ENCODE measurements at regions of chr13 and their contacts with region 1.

Region 1: DNA sequence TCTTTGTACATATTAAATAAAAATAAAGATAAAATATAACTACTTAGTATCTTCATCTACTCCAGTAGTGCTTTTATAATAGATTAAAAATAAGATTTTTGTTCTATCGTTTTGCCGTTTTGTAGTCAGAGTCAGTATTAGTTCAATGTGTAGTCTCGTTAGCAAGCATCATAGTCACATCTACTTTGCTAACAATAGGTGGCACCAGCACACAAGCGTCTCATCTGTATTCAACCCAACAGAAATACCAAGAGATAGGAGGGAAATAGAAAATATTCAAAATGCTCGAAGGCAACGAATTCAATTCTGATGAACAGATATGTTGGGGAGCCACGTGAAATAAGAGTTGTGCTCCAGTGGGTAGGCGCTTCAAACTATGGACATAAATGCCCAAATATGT is 21.4 kb upstream of the MICU2 start:
- DNase-seq: peak; percentile 27
- H3K4me3 Mint-ChIP-seq: no peak overlapping the region
- H3K27ac Mint-ChIP-seq: no peak overlapping the region
- H3K4me1 Mint-ChIP-seq: no peaks in the 10 kb centered on the region
- H3K27me3 Mint-ChIP-seq: peaks cover 3% of the 10 kb centered on the region

Region 2: DNA sequence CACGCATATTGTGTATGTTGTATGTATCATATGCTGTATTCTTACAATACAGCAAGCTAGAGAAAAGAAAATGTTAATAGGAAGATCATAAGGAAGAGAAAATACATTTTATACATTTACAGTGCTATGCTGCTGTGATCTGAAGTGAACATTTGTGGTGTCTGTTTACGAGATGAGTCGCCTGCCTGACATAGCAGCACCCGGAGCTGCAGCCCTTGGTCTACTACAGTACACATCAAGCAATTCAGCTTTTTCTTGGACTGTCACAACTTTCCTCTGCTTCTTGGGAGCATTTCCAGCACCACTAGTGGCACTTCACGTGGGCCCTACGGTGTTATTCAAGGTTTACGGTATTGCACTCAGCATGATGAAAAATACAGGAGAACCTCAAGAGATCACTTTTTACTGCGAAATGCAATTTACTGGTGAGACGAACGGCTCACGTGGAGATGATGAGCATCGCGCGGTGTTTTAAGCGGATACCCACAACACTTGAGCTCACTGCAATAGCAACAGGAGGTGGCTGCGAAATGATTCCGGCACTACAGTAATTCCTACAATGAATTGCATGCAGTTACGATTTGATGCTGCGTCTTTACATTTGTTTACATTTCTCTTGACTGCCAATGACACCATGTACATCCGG is 353.9 kb after region 1 on chr13:
- CTCF ChIA-PET with region 1: no interaction called
- intact Hi-C with region 1: no loop called
- DNase-seq: no peak
- H3K4me3 Mint-ChIP-seq: no peak overlapping the region
- H3K27ac Mint-ChIP-seq: no peak overlapping the region
- H3K4me1 Mint-ChIP-seq: no peaks in the 10 kb centered on the region
- H3K27me3 Mint-ChIP-seq: no peaks in the 10 kb centered on the region

Region 3: DNA sequence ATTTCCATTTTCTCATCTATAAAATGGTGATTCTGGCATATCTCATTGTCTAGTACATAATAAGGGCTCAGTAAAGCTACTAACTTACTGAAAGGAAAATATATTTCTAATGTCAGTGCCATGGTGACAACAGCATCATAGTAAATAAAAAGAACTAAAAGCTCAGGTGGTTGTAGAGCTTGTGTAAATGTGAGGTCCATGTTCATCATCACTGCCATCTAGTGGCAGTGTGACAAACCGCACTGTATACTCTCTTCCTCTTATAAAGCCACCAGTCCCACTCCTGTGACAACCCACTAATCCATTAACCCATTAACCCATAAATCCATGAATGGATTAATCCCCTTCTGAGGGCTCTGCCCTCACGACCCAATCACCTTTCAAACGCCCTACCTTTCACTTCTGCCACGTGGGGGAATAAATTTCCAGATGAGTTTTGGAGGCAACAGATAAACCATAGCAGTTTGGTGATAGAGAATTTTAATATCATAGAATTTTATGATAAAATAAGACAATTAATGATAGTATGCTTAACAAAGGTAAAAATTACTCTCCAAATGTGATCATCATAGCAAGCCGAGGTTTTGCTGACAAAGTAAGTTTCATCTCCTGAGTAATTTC is 1395.0 kb after region 1 on chr13:
- CTCF ChIA-PET with region 1: no interaction called
- intact Hi-C with region 1: loop called (anchors 10 kb)
- DNase-seq: peak; percentile 48
- H3K4me3 Mint-ChIP-seq: no peak overlapping the region
- H3K27ac Mint-ChIP-seq: no peak overlapping the region
- H3K4me1 Mint-ChIP-seq: no peaks in the 10 kb centered on the region
- H3K27me3 Mint-ChIP-seq: peaks cover 11% of the 10 kb centered on the region

Measured in activated naive CD4-positive, alpha-beta T cell treated with anti-CD3 and anti-CD28 coated beads for 36 hours (primary cell).